ENCODE measurements at regions of chr9 and their contacts with region 1.

Region 1: DNA sequence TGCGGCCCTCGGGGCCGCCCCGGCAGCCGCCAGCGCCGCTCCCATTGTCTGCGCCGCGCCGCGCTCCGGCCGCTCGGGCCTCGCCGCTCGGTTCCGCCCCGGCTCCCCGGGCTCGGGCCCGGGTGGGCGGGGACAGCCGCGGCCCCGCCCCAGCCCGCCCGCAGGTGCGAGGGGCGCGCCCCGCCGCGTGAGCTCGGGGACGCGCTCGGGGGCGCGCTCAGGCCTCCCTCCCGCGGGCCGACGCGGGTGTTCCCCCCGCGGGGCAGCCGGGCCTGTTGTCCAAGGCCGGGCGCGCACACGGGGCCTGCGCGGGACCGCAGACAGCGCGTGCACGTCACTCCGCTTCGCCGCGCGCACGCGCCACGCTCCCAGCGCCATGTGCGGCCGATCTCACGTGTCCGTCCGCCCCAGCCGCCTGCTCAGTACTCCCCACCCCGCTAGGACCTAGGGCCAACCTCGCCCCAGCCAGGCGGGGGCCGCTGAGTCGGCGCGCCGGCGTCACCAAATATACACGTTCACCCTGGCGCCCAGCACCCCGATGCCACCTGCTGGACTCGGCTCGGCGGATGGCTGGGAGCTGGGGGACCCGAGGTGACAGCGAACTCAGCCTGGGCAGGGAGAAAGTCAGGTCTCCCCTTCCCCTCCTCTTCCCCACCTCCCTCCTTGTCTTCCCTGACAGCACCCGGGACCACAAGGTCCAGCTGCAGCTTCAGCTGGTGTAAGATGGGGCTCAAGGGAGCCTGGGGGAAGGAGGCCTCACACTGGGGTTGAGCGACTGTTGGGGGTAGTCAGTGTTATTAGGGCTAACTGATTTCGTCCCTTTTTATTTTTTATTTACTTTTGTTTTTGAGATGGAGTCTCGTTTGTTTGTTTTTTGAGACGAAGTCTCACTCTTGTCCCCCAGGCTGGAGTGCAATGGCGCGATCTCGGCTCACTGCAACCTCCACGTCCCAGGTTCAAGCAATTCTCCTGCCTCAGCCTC is 14.3 kb downstream of the GBGT1 start:
- DNase-seq: peak; percentile 93 to 96
- ATAC-seq: peak; percentile 87
- H3K4me3 ChIP-seq: peak overlapping the region; percentile 46 to 50
- H3K27ac ChIP-seq: peak overlapping the region in 1 of 2 donors; percentile 4
- H3K4me1 ChIP-seq: no peaks in the 10 kb centered on the region
- H3K27me3 ChIP-seq: no peaks in the 10 kb centered on the region

Region 2: DNA sequence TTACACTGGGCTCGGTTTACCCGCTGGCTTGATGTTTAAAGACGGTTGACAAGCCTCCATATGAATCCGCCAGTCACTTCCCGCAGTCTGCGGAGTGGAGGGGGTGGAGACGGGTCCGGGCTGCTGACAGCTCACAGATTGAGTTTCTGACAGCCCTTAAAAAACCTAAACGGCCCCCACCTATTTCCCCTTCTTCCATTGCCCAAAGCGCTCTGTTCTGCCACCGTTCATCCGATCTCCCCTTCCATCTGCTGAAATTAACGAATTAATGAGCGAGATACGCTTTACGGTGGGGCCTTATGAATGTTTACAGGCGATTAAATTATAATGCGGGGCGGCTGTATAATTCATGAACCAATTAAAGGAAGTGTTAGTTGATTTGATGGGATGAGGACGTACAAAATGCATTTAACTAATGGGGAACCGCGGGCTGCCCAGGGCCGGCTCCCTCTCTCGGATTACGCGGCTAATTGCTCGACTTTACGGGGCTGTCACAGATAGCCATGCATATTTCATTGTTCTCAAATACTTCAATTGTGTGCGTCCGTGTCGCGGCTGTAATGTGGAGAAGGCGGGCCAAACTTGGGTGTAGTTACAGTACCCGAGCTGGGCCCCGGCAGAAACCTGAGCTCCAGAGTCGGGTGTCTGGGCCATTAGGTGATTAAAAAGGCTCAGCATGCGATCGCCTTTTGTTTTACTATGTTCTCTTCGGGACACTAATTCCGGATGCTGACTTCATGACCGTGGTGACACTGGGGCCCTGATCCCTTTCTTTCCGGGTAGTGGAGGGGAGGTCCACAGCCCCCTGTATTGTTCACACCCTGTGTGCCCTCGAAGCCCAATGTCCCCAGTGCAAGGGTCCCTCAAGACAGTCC is 404.3 kb before region 1 on chr9:
- intact Hi-C with region 1: no loop called
- DNase-seq: peak in 1 of 2 donors; percentile 62
- ATAC-seq: no peak
- H3K4me3 ChIP-seq: no peak overlapping the region
- H3K27ac ChIP-seq: no peak overlapping the region
- H3K4me1 ChIP-seq: no peaks in the 10 kb centered on the region
- H3K27me3 ChIP-seq: no peaks in the 10 kb centered on the region

Region 3: GRCh38 chr9:133030317-133031129 is 118.9 kb before region 1 on chr9 and contains the start of gene GTF3C5:
- intact Hi-C with region 1: loop called in 1 of 2 experiments (anchors 10 kb)
- DNase-seq: peak; percentile 95 to 96
- ATAC-seq: peak; percentile 98
- H3K4me3 ChIP-seq: peak within 1 kb of the TSS; percentile 83 to 92
- H3K27ac ChIP-seq: peak within 1 kb of the TSS in 1 of 2 donors; percentile 80
- H3K4me1 ChIP-seq: peaks cover 2 to 5% of the 10 kb centered on the region in 2 donors
- H3K27me3 ChIP-seq: no peaks in the 10 kb centered on the region
- total RNA-seq, gene GTF3C5: 35.6 to 42.9 TPM

Region 4: GRCh38 chr9:133044661-133045060 is 104.8 kb before region 1 on chr9:
- intact Hi-C with region 1: loop called (anchors 5 to 10 kb)
- DNase-seq: no peak
- ATAC-seq: no peak
- H3K4me3 ChIP-seq: no peak overlapping the region
- H3K27ac ChIP-seq: no peak overlapping the region
- H3K4me1 ChIP-seq: no peaks in the 10 kb centered on the region
- H3K27me3 ChIP-seq: no peaks in the 10 kb centered on the region

Region 5: DNA sequence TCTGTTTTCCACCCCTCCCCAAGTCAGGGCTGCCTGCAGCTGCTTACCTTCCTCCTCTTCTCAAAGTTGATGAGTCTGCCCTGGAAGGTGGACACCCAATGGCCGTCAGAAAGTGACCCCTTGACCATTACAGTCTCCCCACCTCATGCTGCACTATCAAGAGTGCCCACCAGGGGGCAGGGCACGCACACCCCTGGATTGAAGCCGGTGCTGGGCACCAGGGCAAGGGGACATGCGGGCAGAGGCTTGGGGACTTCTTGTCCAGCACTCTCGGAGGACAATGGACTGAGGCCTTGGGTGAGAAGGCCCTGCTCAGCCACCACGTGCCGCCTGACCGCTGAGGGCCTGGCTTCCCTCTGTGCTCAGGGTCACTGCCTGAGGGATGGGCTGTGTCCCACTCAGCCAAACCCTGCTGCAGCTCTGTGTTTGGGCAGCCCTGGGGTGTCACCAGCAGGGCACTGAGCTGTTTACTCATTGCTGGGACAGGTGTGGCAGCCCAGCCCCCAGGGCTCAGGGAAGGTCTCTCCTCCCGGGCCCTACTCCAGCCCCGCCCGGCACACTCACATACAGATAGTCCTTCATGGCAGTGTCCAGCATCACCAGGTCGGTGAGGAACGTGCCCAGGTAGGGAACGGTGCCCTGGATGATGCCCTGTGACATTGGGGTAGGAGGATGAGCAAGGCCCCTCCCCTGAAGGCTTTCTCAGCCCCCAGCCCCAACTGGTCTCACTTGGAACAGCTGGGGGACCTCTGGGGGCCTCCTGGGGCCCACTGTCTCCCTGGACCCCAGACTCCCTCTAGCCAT is 46.0 kb before region 1 on chr9:
- intact Hi-C with region 1: loop called (anchors 1 to 2 kb)
- DNase-seq: peak; percentile 68 to 90
- ATAC-seq: peak; percentile 79
- H3K4me3 ChIP-seq: no peak overlapping the region
- H3K27ac ChIP-seq: no peak overlapping the region
- H3K4me1 ChIP-seq: no peaks in the 10 kb centered on the region
- H3K27me3 ChIP-seq: no peaks in the 10 kb centered on the region

Region 6: DNA sequence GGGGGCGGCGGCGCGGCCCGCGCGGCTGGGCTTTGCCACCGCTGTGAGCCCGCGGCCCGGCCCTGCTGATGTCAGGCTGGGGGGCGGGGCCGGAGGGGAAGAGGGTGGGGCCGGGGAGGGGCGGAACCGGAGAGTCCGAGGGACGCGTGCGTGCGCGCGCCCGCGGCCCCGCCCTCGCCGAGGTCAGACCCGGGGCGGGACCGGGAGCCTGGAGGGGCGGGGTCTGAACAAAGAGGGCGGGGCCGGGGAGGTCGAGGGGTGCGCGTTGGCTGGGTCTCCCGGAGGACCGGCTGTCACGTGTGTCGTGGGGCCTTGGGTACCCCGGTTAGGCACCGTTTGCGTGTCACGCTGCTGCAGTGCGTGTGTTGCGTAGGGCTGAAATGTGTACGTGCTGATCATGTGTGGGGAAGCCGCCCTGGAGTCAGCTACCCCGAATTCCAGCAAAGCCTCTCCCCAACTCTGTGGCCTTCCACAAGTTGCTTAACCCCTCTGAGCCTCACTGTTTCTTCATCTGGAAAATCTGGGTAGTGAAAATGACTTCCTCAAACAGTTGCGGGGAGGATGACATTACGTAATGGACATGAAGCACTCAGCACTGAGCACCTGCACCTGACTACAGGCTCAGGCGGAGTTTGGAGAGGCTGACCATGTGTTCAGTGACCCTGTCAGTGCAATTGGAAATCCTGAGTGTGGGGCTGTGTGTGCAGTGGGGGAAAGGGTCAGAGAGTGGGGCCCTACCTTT is 28.0 kb before region 1 on chr9 and contains the start of gene RALGDS:
- intact Hi-C with region 1: loop called in 1 of 2 experiments (anchors 2 kb)
- DNase-seq: peak; percentile 91 to 97
- ATAC-seq: peak; percentile 88
- H3K4me3 ChIP-seq: peak within 1 kb of the TSS; percentile 49 to 52
- H3K27ac ChIP-seq: peak within 1 kb of the TSS in 1 of 2 donors; percentile 0
- H3K4me1 ChIP-seq: no peaks in the 10 kb centered on the region
- H3K27me3 ChIP-seq: no peaks in the 10 kb centered on the region
- total RNA-seq, gene RALGDS: 32.7 to 61.2 TPM

Region 7: DNA sequence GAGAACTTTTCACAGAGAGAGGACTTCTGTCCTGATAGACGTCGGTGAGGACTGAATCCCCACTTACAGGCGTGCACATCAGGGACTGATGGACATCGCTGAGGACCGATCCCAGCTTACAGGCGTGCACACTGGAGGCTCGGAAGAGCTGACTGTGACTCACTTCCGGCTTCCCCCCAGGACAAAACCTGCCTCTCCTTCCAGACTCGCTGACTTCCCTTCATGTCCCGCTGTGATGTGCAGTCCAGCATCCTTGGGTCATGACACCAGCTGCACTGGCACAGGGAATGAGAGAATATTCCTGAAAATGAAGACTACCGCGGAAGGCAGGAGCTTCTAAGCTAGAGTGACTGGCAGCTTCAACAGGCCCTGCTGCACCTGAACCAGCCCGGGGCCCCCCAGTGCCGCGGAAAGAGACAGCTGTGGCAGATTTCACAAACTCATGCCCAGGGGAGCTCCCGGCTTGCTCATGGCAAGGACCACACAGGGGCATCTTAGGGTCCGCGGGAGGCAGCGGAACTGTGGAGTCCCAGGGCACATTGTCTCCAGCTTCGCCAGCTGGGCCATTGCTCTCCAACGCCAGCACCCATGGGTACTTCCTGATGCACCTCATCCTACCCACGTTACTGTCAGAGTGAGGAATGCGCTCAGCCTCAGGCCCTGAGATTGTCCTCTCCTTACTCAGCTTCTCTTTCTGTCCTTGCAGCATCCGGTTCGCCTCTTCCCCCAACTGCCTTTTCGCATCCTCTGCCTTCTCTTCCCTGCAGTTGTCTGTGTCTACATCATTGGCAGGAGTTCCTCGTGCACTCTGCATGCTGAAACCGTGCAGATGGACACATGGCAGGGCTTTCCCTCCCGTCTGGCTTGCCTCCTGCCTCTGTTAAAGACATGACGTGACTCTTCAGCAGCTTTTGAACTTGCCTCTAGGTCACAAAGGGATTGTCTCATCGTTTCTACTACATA is 157.1 kb after region 1 on chr9:
- intact Hi-C with region 1: no loop called
- DNase-seq: no peak
- ATAC-seq: no peak
- H3K4me3 ChIP-seq: no peak overlapping the region
- H3K27ac ChIP-seq: no peak overlapping the region
- H3K4me1 ChIP-seq: no peaks in the 10 kb centered on the region
- H3K27me3 ChIP-seq: no peaks in the 10 kb centered on the region